Endothelial cell of umbilical vein (primary cell): ENCODE measurements at regions of chr7 and their contacts with region 1.

Region 1: DNA sequence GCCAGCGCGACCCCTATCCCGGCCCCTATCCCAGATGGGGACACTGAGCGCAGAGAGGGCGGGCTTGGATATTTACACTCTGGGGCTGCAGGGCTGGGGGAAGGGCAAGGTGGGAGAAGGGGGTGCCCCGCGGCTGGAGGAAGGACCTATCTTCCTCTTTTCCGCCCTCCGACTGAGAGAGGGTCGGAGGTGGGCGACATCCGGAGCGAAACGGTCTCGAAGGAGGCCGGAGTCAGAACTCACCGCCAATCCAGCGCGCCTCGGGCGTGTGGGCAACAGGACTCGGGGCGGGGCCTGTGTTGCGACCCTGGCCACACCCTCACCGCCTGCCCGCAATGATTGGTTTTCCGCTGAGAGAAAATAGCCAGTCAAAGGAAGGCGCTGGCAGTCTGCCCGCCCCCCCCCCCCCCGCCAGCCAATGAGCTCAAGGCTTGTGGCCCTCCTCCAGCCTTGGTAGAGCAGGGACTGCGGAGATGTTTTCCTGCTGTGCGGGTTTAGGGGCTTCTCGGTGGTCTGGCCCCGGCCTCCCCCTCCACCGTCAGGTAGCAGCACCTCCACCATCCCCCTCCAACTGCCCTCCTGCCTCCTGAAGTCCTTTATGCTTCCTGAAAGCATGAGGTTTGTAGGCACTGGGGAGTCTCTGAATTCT is at the start of gene METTL27:
- DNase-seq: peak; percentile 89
- H3K4me3 ChIP-seq: peak within 1 kb of the TSS; percentile 48 to 75 (median 56)
- H3K27ac ChIP-seq: peak within 1 kb of the TSS; percentile 60
- H3K4me1 ChIP-seq: peaks cover 2% of the 10 kb centered on the region
- H3K27me3 ChIP-seq: no peaks in the 10 kb centered on the region
- CTCF ChIP-seq: no peak
- POLR2A ChIP-seq: peak; percentile 87
- total RNA-seq, gene METTL27: 1.2 and 10.8 TPM in 2 replicates

Region 2: DNA sequence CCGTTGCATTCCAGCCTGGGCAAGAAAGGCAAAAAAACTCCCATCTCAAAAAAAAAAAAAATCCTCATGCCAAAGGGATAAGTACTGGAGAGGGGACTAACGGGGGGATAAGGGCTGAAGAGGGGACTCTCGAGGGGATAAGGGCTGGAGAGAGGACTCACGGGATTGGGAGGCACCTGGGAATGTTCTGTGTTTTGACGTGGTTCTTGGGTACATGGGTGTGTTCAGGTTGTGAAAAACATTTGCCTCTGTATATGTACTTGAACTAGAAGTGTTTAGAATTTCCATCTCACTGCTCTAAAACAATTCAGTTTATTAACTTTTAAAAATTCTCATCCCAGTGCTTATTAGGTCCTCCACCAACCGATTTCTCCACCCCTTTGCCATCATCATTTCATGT is 509.9 kb before region 1 on chr7:
- CTCF ChIA-PET with region 1: no interaction called
- POLR2A ChIA-PET with region 1: no interaction called
- dilution Hi-C with region 1: no loop called
- intact Hi-C with region 1: no loop called
- DNase-seq: no peak
- H3K4me3 ChIP-seq: no peak overlapping the region
- H3K27ac ChIP-seq: no peak overlapping the region
- H3K4me1 ChIP-seq: peaks cover 2% of the 10 kb centered on the region
- H3K27me3 ChIP-seq: peaks cover 18 to 26% of the 10 kb centered on the region in 2 experiments
- CTCF ChIP-seq: no peak
- POLR2A ChIP-seq: no peak

Region 3: GRCh38 chr7:73342645-73343044 is 499.7 kb before region 1 on chr7:
- CTCF ChIA-PET with region 1: no interaction called
- POLR2A ChIA-PET with region 1: no interaction called
- dilution Hi-C with region 1: no loop called
- intact Hi-C with region 1: no loop called
- DNase-seq: peak; percentile 53
- H3K4me3 ChIP-seq: no peak overlapping the region
- H3K27ac ChIP-seq: no peak overlapping the region
- H3K4me1 ChIP-seq: no peaks in the 10 kb centered on the region
- H3K27me3 ChIP-seq: peaks cover 2% of the 10 kb centered on the region in 2 experiments
- CTCF ChIP-seq: peak in 1 of 2 donors; percentile 52
- POLR2A ChIP-seq: no peak

Region 4: GRCh38 chr7:73828107-73828803 is 14.1 kb before region 1 on chr7:
- CTCF ChIA-PET with region 1: interaction called, 6 read pairs
- POLR2A ChIA-PET with region 1: interaction called, 3 read pairs
- dilution Hi-C with region 1: no loop called
- intact Hi-C with region 1: loop called (anchors 2 kb)
- DNase-seq: peak; percentile 69
- H3K4me3 ChIP-seq: no peak overlapping the region
- H3K27ac ChIP-seq: no peak overlapping the region
- H3K4me1 ChIP-seq: peaks cover 5% of the 10 kb centered on the region
- H3K27me3 ChIP-seq: no peaks in the 10 kb centered on the region
- CTCF ChIP-seq: no peak
- POLR2A ChIP-seq: no peak

Region 5: GRCh38 chr7:73952266-73952665 is 109.9 kb after region 1 on chr7:
- CTCF ChIA-PET with region 1: no interaction called
- POLR2A ChIA-PET with region 1: no interaction called
- dilution Hi-C with region 1: no loop called
- intact Hi-C with region 1: no loop called
- DNase-seq: peak; percentile 76
- H3K4me3 ChIP-seq: no peak overlapping the region
- H3K27ac ChIP-seq: no peak overlapping the region
- H3K4me1 ChIP-seq: peaks cover 2% of the 10 kb centered on the region
- H3K27me3 ChIP-seq: no peaks in the 10 kb centered on the region
- CTCF ChIP-seq: no peak
- POLR2A ChIP-seq: no peak